AG04450 (cell line): ENCODE measurements at regions of chr5 and their contacts with region 1.

Region 1: DNA sequence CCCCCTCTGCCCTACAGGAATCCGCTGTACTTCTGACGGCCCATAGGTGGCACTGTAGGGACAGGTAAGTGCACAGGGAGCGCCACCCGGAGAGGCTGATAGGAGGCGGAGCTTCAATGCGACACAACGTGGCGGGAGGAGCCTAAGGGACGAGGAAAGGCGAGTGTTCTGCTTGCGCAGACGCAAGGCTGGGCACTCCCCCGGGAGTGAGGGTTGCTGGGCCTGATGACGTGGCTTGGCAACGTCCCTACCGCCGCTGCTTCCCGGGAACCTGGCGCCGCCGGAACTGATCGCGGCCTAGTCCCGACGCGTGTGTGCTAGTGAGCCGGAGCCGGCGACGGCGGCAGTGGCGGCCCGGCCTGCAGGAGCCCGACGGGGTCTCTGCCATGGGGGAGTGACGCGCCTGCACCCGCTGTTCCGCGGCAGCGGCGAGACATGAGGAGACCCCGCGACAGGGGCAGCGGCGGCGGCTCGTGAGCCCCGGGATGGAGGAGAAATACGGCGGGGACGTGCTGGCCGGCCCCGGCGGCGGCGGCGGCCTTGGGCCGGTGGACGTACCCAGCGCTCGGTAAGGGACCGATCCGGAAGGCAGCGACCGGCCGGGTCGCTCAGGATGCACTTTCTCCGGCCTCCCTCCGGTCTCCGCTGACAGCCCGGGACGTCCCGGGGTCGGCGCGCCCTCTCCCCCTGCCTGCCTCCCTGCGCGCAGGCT is at the start of gene SLC30A5:
- DNase-seq: peak; percentile 100
- H3K4me3 ChIP-seq: peak within 1 kb of the TSS; percentile 83
- H3K27ac ChIP-seq: peak within 1 kb of the TSS; percentile 52
- H3K27me3 ChIP-seq: no peaks in the 10 kb centered on the region
- CTCF ChIP-seq: peak; percentile 95
- polyA plus RNA-seq, gene SLC30A5: 38.4 and 49.2 TPM in 2 replicates

Region 2: GRCh38 chr5:69074664-69075521 is 19.0 kb before region 1 on chr5:
- CTCF ChIA-PET with region 1: interaction called, 21 read pairs
- POLR2A ChIA-PET with region 1: interaction called, 6 read pairs
- DNase-seq: no peak
- H3K4me3 ChIP-seq: no peak overlapping the region
- H3K27ac ChIP-seq: no peak overlapping the region
- H3K27me3 ChIP-seq: no peaks in the 10 kb centered on the region
- CTCF ChIP-seq: no peak

Region 3: DNA sequence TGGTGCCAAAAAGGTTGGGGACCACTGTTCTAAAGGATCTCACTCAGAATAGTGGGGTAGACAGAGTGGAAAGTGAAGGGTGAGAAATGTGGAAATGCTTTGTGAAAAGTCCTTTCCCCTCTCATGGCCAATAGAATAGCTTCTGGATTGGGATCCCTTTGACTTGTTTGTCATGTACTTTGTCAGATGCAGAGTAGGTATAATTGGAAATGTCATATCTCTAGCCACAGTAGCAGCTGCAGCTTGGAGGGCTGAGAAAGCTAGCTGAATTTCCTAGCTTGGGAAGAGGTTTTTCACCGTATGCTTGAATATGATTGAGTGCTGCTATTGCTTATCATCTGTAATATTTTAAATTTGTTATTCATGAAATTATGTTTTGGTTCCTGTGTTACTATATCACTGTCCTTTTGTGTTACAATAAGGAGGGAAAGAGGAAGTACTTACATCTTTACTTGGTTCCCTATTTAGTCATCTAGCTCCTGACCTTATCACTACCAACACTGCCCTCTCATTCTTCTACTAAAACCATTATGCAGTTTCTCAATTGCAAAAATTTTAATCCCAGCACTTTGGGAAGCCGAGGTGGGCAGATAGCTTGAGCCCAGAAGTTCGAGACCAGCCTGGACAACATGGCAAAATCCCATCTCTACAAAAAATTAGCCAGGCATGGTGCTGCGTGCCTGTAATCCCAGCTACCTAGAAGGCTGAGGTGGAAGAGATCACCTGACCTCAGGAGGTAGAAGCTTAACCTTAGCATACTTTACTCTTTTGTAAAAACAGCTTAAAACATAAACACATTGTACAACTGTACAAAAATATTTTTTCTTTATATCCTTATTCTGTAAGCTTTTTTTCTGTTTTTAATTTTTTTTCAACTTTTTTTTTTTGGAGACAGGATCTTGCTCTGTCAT is 12.3 kb after region 1 on chr5:
- CTCF ChIA-PET with region 1: interaction called, 19 read pairs
- POLR2A ChIA-PET with region 1: no interaction called
- DNase-seq: no peak
- H3K4me3 ChIP-seq: no peak overlapping the region
- H3K27ac ChIP-seq: no peak overlapping the region
- H3K27me3 ChIP-seq: no peaks in the 10 kb centered on the region
- CTCF ChIP-seq: no peak

Region 4: DNA sequence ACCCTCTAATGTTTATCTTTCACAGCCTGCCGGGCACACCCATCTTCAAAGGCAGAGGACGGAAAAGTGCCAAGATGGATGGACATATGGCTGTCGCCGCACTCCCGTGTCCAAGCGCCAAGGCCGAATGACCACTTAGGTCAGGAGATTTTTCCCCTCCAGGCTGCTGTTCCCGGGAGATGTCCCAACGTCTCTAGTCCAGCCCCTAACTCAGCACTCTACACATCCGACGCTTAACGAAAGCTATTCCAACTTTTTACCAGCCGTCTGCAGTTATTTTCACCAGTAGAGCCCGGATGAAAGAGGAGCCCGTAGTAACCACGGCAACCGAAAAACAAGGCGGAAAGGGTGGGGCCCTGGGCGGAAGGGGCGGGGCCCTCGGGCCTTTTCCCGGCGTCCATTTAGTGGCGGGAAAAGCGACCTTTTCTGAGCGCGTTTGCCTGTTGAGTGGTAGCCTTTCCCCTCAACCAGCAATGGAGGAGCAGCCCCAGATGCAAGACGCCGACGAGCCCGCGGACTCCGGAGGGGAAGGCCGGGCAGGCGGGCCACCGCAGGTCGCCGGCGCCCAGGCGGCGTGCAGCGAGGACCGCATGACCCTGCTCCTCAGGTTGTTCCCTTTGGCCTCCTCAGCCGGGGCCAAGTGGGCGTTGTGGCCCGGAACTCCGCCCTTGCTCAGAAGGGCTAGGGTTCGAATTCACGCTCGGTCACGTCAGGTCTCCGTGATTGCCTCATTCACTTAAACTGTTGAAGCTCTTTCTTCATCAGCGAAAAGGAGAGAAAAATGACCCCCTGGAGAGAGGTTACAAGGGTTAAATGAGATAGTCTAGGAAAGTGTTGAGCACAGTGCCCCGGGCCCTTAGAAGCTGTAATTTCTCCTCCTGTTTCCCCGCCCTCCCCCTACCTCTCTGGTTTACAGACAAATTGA is 95.5 kb after region 1 on chr5 and contains the start of gene CENPH:
- CTCF ChIA-PET with region 1: interaction called, 10 read pairs
- POLR2A ChIA-PET with region 1: interaction called, 3 read pairs
- DNase-seq: peak; percentile 69
- H3K4me3 ChIP-seq: peak within 1 kb of the TSS; percentile 96
- H3K27ac ChIP-seq: peak within 1 kb of the TSS; percentile 84
- H3K27me3 ChIP-seq: no peaks in the 10 kb centered on the region
- CTCF ChIP-seq: no peak
- polyA plus RNA-seq, gene CENPH: 3.8 and 5.9 TPM in 2 replicates

Region 5: DNA sequence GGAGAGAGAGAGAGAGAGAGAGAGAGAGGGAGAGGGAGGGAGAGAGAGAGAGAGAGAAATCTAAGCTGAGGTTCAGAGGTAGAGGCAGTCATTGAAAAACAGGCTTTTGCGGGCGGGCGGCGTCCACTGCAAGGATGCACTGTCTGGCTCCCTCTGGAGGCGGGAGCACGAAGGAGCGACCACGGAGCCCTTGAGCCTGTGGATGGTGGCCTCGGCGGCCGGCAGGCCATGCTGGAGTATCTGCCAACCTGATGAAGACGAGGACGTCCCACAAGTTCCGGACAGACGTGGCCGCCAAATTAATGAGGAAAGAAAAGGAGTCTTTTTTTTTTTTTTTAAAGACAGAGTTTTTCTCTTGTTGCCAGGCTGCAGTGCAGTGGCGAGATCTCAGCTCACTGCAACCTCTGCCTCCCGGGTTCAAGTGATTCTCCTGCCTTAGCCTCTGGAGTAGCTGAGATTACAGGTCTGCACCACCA is 240.9 kb after region 1 on chr5:
- CTCF ChIA-PET with region 1: interaction called, 58 read pairs
- POLR2A ChIA-PET with region 1: interaction called, 3 read pairs
- DNase-seq: peak; percentile 46
- H3K4me3 ChIP-seq: no peak overlapping the region
- H3K27ac ChIP-seq: no peak overlapping the region
- H3K27me3 ChIP-seq: no peaks in the 10 kb centered on the region
- CTCF ChIP-seq: peak; percentile 87